MCF 10A (cell line): ENCODE measurements at regions of chr7 and their contacts with region 1.

Region 1: GRCh38 chr7:35801392-35802101 is 690 bp downstream of the SEPTIN7 start:
- DNase-seq: peak; percentile 67
- H3K4me3 Mint-ChIP-seq: peak overlapping the region; percentile 97
- H3K27ac Mint-ChIP-seq: peak overlapping the region; percentile 97
- H3K4me1 Mint-ChIP-seq: peaks cover 10% of the 10 kb centered on the region
- H3K27me3 Mint-ChIP-seq: no peaks in the 10 kb centered on the region
- CTCF ChIP-seq: peak; percentile 49

Region 2: GRCh38 chr7:35241884-35242283 is 559.7 kb before region 1 on chr7:
- CTCF ChIA-PET with region 1: no interaction called
- POLR2A ChIA-PET with region 1: no interaction called
- intact Hi-C with region 1: no loop called
- DNase-seq: peak; percentile 27
- H3K4me3 Mint-ChIP-seq: no peak overlapping the region
- H3K27ac Mint-ChIP-seq: no peak overlapping the region
- H3K4me1 Mint-ChIP-seq: no peaks in the 10 kb centered on the region
- H3K27me3 Mint-ChIP-seq: peaks cover 75% of the 10 kb centered on the region
- CTCF ChIP-seq: no peak

Region 3: GRCh38 chr7:35707422-35707821 is 94.1 kb before region 1 on chr7:
- CTCF ChIA-PET with region 1: interaction called, 27 read pairs
- POLR2A ChIA-PET with region 1: interaction called, 20 read pairs
- intact Hi-C with region 1: loop called (anchors 1 kb)
- DNase-seq: no peak
- H3K4me3 Mint-ChIP-seq: no peak overlapping the region
- H3K27ac Mint-ChIP-seq: no peak overlapping the region
- H3K4me1 Mint-ChIP-seq: peaks cover 5% of the 10 kb centered on the region
- H3K27me3 Mint-ChIP-seq: no peaks in the 10 kb centered on the region
- CTCF ChIP-seq: no peak

Region 4: GRCh38 chr7:35781200-35781701 is 20.3 kb before region 1 on chr7:
- CTCF ChIA-PET with region 1: interaction called, 4 read pairs
- POLR2A ChIA-PET with region 1: interaction called, 10 read pairs
- intact Hi-C with region 1: no loop called
- DNase-seq: no peak
- H3K4me3 Mint-ChIP-seq: no peak overlapping the region
- H3K27ac Mint-ChIP-seq: no peak overlapping the region
- H3K4me1 Mint-ChIP-seq: peaks cover 6% of the 10 kb centered on the region
- H3K27me3 Mint-ChIP-seq: no peaks in the 10 kb centered on the region
- CTCF ChIP-seq: no peak

Region 5: DNA sequence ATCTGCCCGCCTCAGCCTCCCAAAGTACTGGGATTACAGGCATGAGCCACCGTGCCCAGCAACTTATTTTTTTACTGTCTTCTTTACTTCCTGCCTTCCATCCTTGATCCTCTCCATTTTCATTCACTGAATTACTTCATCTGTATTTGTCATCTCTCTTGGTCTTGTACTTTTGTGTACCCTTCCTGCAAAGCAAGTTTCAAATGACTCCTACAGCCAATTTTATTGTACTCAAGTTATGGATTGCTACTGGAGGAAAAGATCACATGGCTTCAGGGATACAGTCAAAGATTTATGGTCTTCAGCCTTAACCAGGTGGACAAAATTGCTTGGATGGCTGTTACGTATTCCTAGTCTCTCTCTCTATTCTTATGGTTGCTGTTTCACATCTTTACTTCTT is 21.9 kb after region 1 on chr7:
- CTCF ChIA-PET with region 1: interaction called, 6 read pairs
- POLR2A ChIA-PET with region 1: interaction called, 18 read pairs
- intact Hi-C with region 1: no loop called
- DNase-seq: no peak
- H3K4me3 Mint-ChIP-seq: no peak overlapping the region
- H3K27ac Mint-ChIP-seq: no peak overlapping the region
- H3K4me1 Mint-ChIP-seq: peaks cover 22% of the 10 kb centered on the region
- H3K27me3 Mint-ChIP-seq: no peaks in the 10 kb centered on the region
- CTCF ChIP-seq: no peak

Region 6: DNA sequence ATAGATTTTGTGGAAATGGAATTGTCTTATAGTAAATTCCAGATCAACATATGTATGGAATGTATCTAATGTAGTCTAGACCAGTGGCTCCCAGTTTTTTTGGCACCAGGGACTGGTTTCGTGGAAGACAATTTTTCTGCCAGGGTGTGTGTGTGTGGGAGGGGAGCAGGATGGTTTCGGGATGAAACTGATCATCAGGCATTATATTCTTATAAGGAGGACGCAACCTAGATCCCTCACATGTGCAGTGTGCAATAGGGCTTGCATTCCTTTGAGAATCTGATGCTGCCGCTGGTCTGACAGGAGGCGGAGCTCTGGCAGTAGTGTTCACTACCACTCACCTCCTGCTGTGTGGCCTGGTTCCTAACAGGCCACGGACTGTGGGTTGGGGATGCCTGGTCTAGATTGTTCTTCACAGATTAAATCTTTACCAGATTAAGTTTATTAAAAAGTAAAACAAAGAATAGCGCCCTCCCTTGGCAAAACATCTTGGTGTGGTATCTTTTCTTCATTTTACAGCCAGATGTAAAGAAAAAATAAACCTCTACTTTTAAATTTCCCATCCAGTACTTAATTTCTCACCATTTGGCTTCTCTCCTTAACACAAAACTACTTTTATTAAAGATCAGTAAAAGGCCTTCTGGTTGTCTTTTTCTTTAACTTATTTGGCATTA is 47.7 kb after region 1 on chr7:
- CTCF ChIA-PET with region 1: interaction called, 6 read pairs
- POLR2A ChIA-PET with region 1: interaction called, 18 read pairs
- intact Hi-C with region 1: loop called (anchors 5 kb)
- DNase-seq: peak; percentile 69
- H3K4me3 Mint-ChIP-seq: peak overlapping the region; percentile 16
- H3K27ac Mint-ChIP-seq: peak overlapping the region; percentile 72
- H3K4me1 Mint-ChIP-seq: peaks cover 15% of the 10 kb centered on the region
- H3K27me3 Mint-ChIP-seq: no peaks in the 10 kb centered on the region
- CTCF ChIP-seq: no peak